OCI-LY7 (cell line): ENCODE measurements at regions of chr11 and their contacts with region 1.

Region 1: GRCh38 chr11:61429691-61430582 is at the starts of genes CPSF7 and SDHAF2:
- DNase-seq: peak; percentile 98
- H3K4me3 ChIP-seq: peak within 1 kb of the TSS; percentile 94
- H3K27ac ChIP-seq: peak within 1 kb of the TSS; percentile 89
- H3K4me1 ChIP-seq: peaks cover 37% of the 10 kb centered on the region
- CTCF ChIP-seq: no peak
- total RNA-seq, gene CPSF7: 56.1 and 69.4 TPM in 2 replicates
- total RNA-seq, gene SDHAF2: 40.6 and 41.2 TPM in 2 replicates

Region 2: DNA sequence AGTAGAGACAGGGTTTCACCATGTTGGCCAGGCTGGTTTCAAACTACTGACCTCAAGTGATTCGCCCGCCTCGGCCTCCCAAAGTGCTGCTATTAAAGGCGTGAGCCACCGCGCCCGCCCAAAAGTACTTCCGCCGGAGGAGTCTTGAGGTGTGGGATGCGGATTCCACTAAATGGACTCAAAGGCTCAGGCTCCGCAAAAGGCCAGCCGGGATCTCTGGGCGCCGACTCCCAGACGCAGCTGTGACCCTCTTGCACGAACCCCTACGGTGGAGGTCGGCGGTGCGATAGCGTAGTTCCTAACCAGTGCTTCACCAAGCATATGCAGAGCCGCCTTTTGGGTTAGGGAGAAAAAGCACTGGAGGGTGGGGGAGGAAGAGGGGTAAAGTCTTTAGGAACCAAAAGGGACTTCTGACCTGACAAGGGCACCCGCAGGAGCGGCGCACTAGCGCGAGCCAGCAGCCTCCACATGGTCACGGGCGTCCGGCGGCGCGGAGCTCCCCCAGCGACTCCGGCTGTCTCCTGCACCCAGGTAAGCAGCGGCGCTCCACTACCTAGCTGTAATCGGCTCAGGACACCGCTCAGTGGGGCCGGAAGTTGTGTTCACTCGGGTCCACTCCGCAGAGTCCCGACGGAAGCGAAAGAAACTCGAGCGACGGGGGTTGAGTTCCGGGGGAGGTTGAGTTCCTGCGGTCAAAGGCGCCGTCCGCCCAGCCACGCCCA is 1619.6 kb before region 1 on chr11 and contains the start of gene MRPL16:
- CTCF ChIA-PET with region 1: no interaction called
- POLR2A ChIA-PET with region 1: no interaction called
- intact Hi-C with region 1: no loop called
- DNase-seq: peak; percentile 96
- H3K4me3 ChIP-seq: peak within 1 kb of the TSS; percentile 98
- H3K27ac ChIP-seq: peak within 1 kb of the TSS; percentile 80
- H3K4me1 ChIP-seq: peaks cover 53% of the 10 kb centered on the region
- CTCF ChIP-seq: peak; percentile 63
- total RNA-seq, gene MRPL16: 133 and 159 TPM in 2 replicates

Region 3: DNA sequence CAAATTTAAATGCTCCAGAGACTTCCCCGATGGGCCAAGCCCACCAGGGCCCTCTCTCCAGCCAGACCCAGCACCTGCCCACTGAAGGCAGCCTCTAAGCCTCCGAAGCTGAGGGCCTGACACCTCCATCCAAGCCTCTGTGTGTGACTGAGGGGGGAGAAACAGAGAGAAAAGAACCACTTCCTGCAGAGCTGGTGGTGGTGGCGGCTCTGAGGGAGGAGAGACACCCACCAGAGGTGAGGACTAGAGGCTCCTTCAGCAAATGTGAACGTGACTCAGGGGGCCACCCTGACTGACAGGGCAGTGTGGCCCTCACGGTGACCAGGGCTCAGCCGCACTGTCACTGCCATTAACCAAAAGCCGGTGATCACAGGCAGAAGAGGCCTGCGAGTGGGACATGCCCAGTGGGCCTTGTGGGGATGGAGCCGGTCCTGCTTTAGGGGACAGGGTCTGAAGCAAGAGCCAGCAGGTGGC is 358.7 kb before region 1 on chr11:
- CTCF ChIA-PET with region 1: no interaction called
- POLR2A ChIA-PET with region 1: no interaction called
- intact Hi-C with region 1: no loop called
- DNase-seq: peak; percentile 72
- H3K4me3 ChIP-seq: peak overlapping the region; percentile 40
- H3K27ac ChIP-seq: peak overlapping the region; percentile 93
- H3K4me1 ChIP-seq: peaks cover 30% of the 10 kb centered on the region
- CTCF ChIP-seq: no peak

Region 4: GRCh38 chr11:61332797-61333549 is 97.0 kb before region 1 on chr11 and contains the starts of genes DDB1 and TKFC:
- CTCF ChIA-PET with region 1: interaction called, 3 read pairs
- POLR2A ChIA-PET with region 1: interaction called, 5 read pairs
- intact Hi-C with region 1: loop called (anchors 5 kb)
- DNase-seq: peak; percentile 96
- H3K4me3 ChIP-seq: peak within 1 kb of the TSS; percentile 98
- H3K27ac ChIP-seq: peak within 1 kb of the TSS; percentile 79
- H3K4me1 ChIP-seq: peaks cover 44% of the 10 kb centered on the region
- CTCF ChIP-seq: no peak
- total RNA-seq, gene DDB1: 194 and 218 TPM in 2 replicates
- total RNA-seq, gene TKFC: 75.3 and 77.8 TPM in 2 replicates